IMR-90 (cell line): ENCODE measurements at regions of chr10 and their contacts with region 1.

Region 1: DNA sequence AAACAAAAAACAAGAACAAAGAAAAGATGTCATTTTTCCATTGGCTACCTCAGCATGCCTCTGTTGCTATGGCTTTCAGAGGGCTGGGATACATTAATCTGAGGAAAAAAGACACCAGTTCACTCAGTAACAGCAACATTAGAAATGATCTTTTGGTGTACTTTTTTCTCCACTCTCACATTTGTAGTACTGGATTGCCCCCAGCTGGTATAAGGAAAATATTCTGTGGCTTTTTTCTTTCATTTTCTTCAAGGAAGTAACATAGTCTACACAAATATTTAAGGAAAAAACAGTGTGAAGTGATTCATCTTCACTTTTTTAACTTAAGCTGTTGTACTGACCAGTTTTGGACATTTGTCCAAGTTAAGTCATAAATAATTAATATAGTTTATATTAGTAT is 482.3 kb downstream of the SORCS1 start:
- DNase-seq: peak; percentile 4
- ATAC-seq: no peak
- H3K4me3 ChIP-seq: no peak overlapping the region
- H3K27ac ChIP-seq: no peak overlapping the region
- H3K4me1 ChIP-seq: no peaks in the 10 kb centered on the region
- H3K27me3 ChIP-seq: no peaks in the 10 kb centered on the region
- CTCF ChIP-seq: peak; percentile 29; the same call in 1 of the 2 replicates
- POLR2A ChIP-seq: no peak
- RAD21 ChIP-seq: peak; percentile 31

Region 2: DNA sequence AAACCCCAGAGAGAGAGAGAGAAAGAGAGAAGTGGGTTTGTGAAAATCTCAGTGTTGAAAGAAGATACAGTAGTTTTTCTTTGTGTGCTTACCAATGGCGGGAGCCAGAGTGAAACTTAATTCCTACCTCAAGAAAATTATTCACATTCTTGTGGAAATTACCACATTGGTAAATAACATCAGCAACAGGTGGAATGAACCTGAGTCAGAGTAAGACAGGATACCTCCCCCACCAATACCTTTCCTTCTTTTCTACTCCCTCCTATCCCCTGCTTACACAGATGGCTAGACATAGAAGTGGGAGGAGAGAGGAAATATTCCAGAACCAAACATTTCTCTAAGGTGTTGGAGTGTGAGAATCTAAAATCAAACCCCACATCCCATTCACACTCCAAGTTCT is 1247.2 kb before region 1 on chr10:
- CTCF ChIA-PET with region 1: no interaction called
- POLR2A ChIA-PET with region 1: no interaction called
- dilution Hi-C with region 1: no loop called
- in situ Hi-C with region 1: no loop called
- intact Hi-C with region 1: no loop called
- DNase-seq: no peak
- ATAC-seq: no peak
- H3K4me3 ChIP-seq: no peak overlapping the region
- H3K27ac ChIP-seq: no peak overlapping the region
- H3K4me1 ChIP-seq: no peaks in the 10 kb centered on the region
- H3K27me3 ChIP-seq: no peaks in the 10 kb centered on the region
- CTCF ChIP-seq: no peak
- POLR2A ChIP-seq: no peak
- RAD21 ChIP-seq: no peak

Region 3: DNA sequence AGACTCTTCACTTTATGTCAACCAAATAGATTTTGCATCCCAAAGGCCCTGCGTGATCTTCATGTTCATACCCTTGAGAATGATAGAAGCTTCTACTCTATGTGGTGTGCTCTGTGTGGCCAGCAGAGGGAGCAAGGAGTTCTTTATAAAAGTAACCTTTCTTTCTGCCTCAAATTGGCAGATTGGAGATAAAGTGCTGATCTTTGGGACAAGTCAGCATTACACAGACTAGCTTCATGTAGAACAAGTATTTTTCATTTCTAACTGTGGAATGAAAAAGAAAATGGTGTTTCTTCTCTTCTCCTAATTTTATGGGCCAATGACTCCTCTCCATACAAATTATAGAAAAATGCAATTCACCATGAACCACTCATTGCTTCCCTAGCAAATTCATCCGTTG is 731.8 kb before region 1 on chr10:
- CTCF ChIA-PET with region 1: no interaction called
- POLR2A ChIA-PET with region 1: no interaction called
- dilution Hi-C with region 1: no loop called
- in situ Hi-C with region 1: no loop called
- intact Hi-C with region 1: loop called (anchors 1 kb)
- DNase-seq: peak; percentile 34
- ATAC-seq: peak; percentile 53
- H3K4me3 ChIP-seq: no peak overlapping the region
- H3K27ac ChIP-seq: no peak overlapping the region
- H3K4me1 ChIP-seq: no peaks in the 10 kb centered on the region
- H3K27me3 ChIP-seq: no peaks in the 10 kb centered on the region
- CTCF ChIP-seq: peak; percentile 48
- POLR2A ChIP-seq: no peak
- RAD21 ChIP-seq: peak; percentile 32

Region 4: DNA sequence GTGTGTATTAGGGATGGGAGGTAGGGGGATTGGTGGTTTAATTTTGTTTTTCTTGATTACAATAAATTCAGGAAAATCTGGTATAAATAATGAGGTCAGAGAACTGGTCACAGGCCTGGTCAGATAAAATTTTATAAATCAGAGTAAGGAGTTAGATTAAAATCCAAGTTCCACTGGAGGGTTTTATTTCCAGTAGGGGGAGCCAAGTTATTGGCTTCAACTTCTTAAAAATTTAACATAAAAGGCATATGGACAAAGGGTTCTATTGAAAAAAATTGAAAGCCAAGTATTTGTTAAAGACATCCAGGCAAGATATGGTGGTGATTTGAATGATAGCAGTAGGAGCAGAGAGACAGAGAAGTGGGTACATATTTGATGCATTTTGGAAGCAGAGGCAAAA is 281.0 kb before region 1 on chr10:
- CTCF ChIA-PET with region 1: no interaction called
- POLR2A ChIA-PET with region 1: no interaction called
- dilution Hi-C with region 1: no loop called
- in situ Hi-C with region 1: no loop called
- intact Hi-C with region 1: loop called (anchors 10 kb)
- DNase-seq: peak; percentile 40
- ATAC-seq: no peak
- H3K4me3 ChIP-seq: no peak overlapping the region
- H3K27ac ChIP-seq: no peak overlapping the region
- H3K4me1 ChIP-seq: no peaks in the 10 kb centered on the region
- H3K27me3 ChIP-seq: no peaks in the 10 kb centered on the region
- CTCF ChIP-seq: peak; percentile 46
- POLR2A ChIP-seq: no peak
- RAD21 ChIP-seq: peak; percentile 50

Region 5: GRCh38 chr10:106625751-106626150 is 56.4 kb before region 1 on chr10:
- CTCF ChIA-PET with region 1: no interaction called
- POLR2A ChIA-PET with region 1: no interaction called
- dilution Hi-C with region 1: no loop called
- in situ Hi-C with region 1: no loop called
- intact Hi-C with region 1: loop called (anchors 1 kb)
- DNase-seq: no peak
- ATAC-seq: no peak
- H3K4me3 ChIP-seq: no peak overlapping the region
- H3K27ac ChIP-seq: no peak overlapping the region
- H3K4me1 ChIP-seq: no peaks in the 10 kb centered on the region
- H3K27me3 ChIP-seq: no peaks in the 10 kb centered on the region
- CTCF ChIP-seq: no peak
- POLR2A ChIP-seq: no peak
- RAD21 ChIP-seq: no peak

Region 6: DNA sequence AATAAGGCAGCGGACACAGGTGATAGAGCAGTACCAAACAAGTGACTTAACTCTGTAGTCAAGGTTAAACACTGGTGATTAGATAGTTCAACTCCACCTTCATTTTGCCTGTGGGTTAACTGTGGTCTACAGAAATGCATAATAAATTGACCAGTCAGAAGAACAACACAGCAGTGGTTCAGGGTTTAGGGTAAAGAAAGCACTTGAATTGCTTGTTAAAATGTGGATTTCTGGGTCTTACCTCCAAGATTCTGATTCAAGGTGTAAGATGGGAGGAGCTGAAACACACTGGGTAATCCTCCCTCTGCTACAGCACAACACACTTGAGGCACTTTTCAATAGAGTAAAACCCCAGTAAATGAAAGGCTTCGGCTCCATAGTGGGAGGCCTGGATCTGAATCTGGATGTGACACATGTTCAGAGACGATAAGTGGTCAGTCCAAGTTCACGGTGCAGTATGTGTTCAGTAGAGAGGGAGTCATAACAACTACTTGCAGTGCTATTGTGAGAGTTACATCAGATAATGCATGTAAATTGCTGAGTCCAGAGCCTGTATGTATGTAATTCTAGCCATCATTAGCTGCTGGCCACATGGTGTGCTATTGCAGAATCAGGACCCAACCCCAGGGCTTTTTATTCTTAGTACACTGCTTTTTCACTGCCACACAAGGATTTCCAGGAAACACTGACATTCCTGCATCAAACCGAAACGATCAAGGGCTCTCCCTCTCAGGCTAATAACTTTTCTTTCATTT is 340.6 kb after region 1 on chr10:
- CTCF ChIA-PET with region 1: no interaction called
- POLR2A ChIA-PET with region 1: no interaction called
- dilution Hi-C with region 1: no loop called
- in situ Hi-C with region 1: no loop called
- intact Hi-C with region 1: no loop called
- DNase-seq: no peak
- ATAC-seq: no peak
- H3K4me3 ChIP-seq: no peak overlapping the region
- H3K27ac ChIP-seq: no peak overlapping the region
- H3K4me1 ChIP-seq: no peaks in the 10 kb centered on the region
- H3K27me3 ChIP-seq: no peaks in the 10 kb centered on the region
- CTCF ChIP-seq: no peak
- POLR2A ChIP-seq: no peak
- RAD21 ChIP-seq: no peak